ENCODE measurements at regions of chr4 and their contacts with region 1.

Region 1: GRCh38 chr4:3201718-3202702 is 46.9 kb upstream of the MSANTD1 start:
- DNase-seq: peak; percentile 74
- H3K4me3 Mint-ChIP-seq: peak overlapping the region; percentile 70
- H3K27ac Mint-ChIP-seq: peak overlapping the region; percentile 94
- H3K4me1 Mint-ChIP-seq: peaks cover 31% of the 10 kb centered on the region
- H3K27me3 Mint-ChIP-seq: no peaks in the 10 kb centered on the region

Region 2: GRCh38 chr4:3021627-3022026 is 180.4 kb before region 1 on chr4:
- intact Hi-C with region 1: no loop called
- DNase-seq: no peak
- H3K4me3 Mint-ChIP-seq: no peak overlapping the region
- H3K27ac Mint-ChIP-seq: no peak overlapping the region
- H3K4me1 Mint-ChIP-seq: no peaks in the 10 kb centered on the region
- H3K27me3 Mint-ChIP-seq: peaks cover 22% of the 10 kb centered on the region

Region 3: GRCh38 chr4:3085948-3086655 is 115.9 kb before region 1 on chr4:
- intact Hi-C with region 1: loop called (anchors 5 kb)
- DNase-seq: no peak
- H3K4me3 Mint-ChIP-seq: no peak overlapping the region
- H3K27ac Mint-ChIP-seq: peak overlapping the region; percentile 80
- H3K4me1 Mint-ChIP-seq: peaks cover 58% of the 10 kb centered on the region
- H3K27me3 Mint-ChIP-seq: no peaks in the 10 kb centered on the region

Region 4: DNA sequence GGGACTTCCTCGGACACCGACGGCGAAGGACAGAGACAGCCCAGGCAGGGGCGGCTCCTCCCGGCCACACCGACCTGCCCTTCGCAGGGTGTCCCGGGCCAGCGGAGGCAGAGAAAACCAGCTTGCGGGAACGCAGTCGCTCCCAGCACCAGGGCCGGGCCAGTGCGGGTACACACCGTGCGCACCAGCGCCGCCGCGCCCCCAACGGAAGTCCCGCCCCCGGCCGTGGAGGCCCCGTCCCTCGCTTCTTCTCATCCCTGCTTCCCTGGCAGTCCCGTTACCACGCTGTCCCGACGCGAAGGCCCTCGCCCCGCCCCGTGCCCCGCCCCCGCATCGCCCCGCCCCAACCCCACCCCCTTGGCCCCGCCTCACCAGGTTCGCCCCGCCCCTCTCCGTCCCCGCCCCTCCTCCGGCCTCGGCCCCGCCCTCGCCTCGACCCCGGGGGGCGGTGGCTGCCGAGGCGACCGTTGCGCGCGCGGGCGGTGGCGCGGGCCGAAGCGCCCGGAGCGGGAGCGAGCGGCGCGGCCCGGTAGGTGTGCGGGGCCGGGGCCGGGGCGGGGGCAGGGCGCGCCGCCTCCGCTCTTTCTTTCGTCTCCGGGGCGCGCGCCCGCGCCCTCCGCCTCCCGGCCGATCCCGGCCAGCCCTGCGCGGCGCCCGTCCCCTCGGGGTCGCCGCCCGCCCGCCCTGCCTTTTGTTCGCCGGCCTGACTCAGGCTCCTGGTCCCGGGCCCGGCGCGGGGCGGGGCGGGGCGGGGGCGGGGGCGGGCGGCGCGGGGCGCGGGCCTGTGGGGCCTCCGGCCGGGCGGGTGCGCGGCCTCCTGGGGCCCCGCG is 90.8 kb after region 1 on chr4 and contains the start of gene RGS12:
- intact Hi-C with region 1: loop called (anchors 1 kb)
- DNase-seq: peak; percentile 80
- H3K4me3 Mint-ChIP-seq: peak within 1 kb of the TSS; percentile 83
- H3K27ac Mint-ChIP-seq: peak within 1 kb of the TSS; percentile 72
- H3K4me1 Mint-ChIP-seq: peaks cover 6% of the 10 kb centered on the region
- H3K27me3 Mint-ChIP-seq: peaks cover 50% of the 10 kb centered on the region
- total RNA-seq, gene RGS12: 3.1 and 3.6 TPM in 2 replicates

Region 5: DNA sequence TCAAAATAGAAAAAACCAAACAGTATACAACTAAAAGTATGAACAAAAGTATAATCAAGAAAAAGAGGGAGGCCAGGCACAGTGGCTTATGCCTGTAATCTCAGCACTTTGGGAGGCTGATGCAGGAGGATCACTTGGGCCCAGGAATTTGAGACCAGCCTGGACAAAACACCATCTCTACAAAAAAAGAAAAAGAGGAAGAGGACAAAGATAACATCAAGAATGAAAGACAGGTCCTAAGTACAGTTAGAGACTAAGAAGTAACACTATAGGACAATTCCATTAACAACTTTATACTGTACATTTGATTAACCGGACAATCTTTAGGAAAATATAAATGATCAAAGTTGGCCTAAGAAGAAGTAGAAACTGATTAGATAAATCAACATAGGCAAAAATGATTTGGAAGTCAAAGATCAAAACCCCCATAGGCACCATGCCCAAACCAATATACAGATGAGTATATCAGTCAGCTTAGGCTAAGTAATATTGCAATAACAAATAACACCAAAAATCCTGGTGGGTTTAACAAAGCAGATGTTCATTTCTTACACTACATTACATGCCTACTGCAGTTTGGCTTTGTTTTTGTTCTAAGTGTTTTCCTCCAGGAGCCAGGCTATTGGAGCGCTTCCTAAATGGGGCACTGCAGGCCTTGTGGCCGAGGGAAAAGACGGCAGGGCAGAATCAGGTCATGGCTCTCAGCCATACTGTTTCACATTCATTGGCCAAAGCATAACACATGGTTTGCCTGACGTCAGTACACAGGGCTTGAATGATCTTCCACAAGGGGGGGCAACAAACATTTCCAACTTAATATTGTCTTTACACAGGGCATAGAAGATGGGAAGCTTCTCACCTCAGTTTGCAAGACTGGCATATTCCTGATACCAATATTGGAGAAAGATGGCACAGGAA is 197.5 kb after region 1 on chr4:
- intact Hi-C with region 1: no loop called
- DNase-seq: no peak
- H3K4me3 Mint-ChIP-seq: no peak overlapping the region
- H3K27ac Mint-ChIP-seq: no peak overlapping the region
- H3K4me1 Mint-ChIP-seq: no peaks in the 10 kb centered on the region
- H3K27me3 Mint-ChIP-seq: peaks cover 4% of the 10 kb centered on the region

Region 6: GRCh38 chr4:3452376-3452775 is 250.4 kb after region 1 on chr4:
- intact Hi-C with region 1: no loop called
- DNase-seq: no peak
- H3K4me3 Mint-ChIP-seq: no peak overlapping the region
- H3K27ac Mint-ChIP-seq: no peak overlapping the region
- H3K4me1 Mint-ChIP-seq: no peaks in the 10 kb centered on the region
- H3K27me3 Mint-ChIP-seq: peaks cover 4% of the 10 kb centered on the region

Measured in activated T-helper 1 cell treated with anti-CD3 and anti-CD28 coated beads, Interleukin-12 subunit alpha, Interleukin-12 subunit beta, Interleukin-2, Interleukin-4 antibody, amounts not matched to agents 30 ng/mL and 10 ng/mL and 1 ng/mL, durations not matched to agents 14 hours and 24 hours and 36 hours (primary cell).